ENCODE measurements at regions of chr11 and their contacts with region 1.

Region 1: DNA sequence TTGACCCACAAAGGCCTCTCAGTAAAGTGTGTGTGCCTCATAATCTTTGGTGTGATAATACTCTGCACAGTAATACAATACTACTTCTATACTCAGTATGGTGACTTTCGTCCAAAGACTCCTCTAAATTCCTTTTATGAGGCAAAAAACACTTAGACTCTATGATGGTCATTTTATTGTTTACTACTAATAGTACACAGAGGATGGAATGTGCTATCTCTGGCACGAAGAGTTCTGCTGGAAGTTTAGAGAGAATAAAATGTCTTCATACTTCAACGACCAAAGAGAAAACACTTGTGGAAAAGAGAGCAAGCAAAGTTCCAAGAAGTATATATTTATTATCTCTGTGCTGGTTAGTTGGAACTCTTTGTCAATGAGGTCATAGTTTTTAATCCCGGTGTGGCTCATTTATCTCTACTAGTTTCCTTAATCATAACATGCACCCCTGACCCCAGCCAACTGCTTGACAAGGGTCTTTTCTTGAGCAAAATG is 7.5 kb upstream of the CSTF3 start:
- DNase-seq: no peak
- ATAC-seq: no peak
- H3K4me3 ChIP-seq: no peak overlapping the region
- H3K27ac ChIP-seq: no peak overlapping the region
- H3K4me1 ChIP-seq: no peaks in the 10 kb centered on the region
- H3K27me3 ChIP-seq: peaks cover 0 to 1% of the 10 kb centered on the region in 2 donors

Region 2: GRCh38 chr11:33060271-33060670 is 108.5 kb before region 1 on chr11:
- intact Hi-C with region 1: no loop called
- DNase-seq: no peak
- ATAC-seq: no peak
- H3K4me3 ChIP-seq: no peak overlapping the region
- H3K27ac ChIP-seq: no peak overlapping the region
- H3K4me1 ChIP-seq: no peaks in the 10 kb centered on the region
- H3K27me3 ChIP-seq: no peaks in the 10 kb centered on the region

Region 3: GRCh38 chr11:33147559-33147958 is 21.2 kb before region 1 on chr11:
- intact Hi-C with region 1: no loop called
- DNase-seq: no peak
- ATAC-seq: no peak
- H3K4me3 ChIP-seq: no peak overlapping the region
- H3K27ac ChIP-seq: no peak overlapping the region
- H3K4me1 ChIP-seq: no peaks in the 10 kb centered on the region
- H3K27me3 ChIP-seq: no peaks in the 10 kb centered on the region

Region 4: DNA sequence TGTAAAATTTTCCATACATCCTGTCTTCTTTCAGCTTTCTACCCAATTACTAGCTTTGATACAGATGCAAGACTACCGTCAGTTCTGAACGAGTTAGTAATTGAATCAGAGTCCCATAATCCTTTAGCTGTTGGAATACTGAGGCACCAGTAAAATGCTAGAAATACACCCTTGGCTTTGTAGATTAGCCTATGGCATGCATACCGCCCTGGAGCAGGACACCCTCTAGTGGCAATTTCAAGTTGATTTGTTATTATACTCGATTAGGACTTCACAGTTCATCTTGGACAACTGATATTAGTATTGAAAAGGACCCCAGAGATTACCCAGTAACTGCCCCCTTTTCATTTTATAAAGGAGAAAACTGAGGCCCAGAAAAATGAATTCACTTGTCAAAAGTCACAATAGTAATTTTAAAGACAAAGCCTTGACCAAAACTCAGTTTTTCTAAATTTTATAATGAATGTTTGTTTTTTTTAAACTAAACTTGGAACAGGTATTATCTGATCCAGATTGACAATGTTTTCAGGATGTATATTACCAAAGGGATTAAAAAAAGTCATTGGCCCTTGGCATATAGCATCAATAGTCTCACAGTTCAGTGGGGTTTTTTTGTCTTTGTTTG is 161.1 kb after region 1 on chr11:
- intact Hi-C with region 1: loop called (anchors 5 kb)
- DNase-seq: no peak
- ATAC-seq: peak; percentile 65
- H3K4me3 ChIP-seq: no peak overlapping the region
- H3K27ac ChIP-seq: no peak overlapping the region
- H3K4me1 ChIP-seq: peaks cover 0 to 9% of the 10 kb centered on the region in 2 donors
- H3K27me3 ChIP-seq: no peaks in the 10 kb centered on the region

Measured in aorta (tissue), 5 donors.